ENCODE measurements at regions of chr15 and their contacts with region 1.

Region 1: DNA sequence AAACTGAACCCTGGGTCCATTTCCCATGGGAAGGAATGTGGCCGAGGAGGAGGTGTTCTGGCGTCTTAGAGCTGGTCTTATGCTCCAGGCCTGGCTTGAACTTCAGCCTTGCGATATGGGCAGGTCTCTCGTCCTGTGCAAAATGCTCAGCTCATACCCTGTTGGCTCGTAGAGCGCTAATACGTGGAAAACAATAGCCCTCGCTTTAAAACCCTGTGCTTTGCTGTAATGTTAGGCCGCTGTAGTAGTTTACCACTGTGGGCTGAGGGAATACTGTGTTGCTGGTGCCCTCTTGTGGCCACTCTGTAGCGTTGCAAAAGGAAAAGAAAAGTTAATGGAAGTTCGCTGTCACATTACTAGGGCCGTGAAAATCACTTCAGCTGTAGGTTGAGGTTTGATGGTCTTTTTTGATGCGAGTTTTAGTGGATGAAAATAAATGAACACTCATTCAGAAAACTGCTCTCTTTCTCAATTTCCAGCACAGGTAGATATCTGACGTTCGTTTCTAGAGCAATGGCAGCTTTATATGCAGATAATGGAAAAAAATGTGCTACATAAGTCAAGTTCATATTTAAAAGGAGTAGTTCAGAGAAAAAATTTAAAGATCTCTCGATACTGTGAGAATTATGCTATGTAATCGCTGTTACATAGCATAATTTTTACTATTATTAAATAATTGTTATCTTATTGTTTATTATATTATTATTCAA is 92.9 kb downstream of the MCTP2 start:
- DNase-seq: peak; percentile 35 to 49 (median 45)
- ATAC-seq: peak; percentile 92
- H3K4me3 ChIP-seq: no peak overlapping the region
- H3K27ac ChIP-seq: no peak overlapping the region
- H3K4me1 ChIP-seq: no peaks in the 10 kb centered on the region
- H3K27me3 ChIP-seq: no peaks in the 10 kb centered on the region
- CTCF ChIP-seq: peak; percentile 65 to 83 (median 80)
- EP300 ChIP-seq: no peak
- POLR2A ChIP-seq: no peak
- RAD21 ChIP-seq: peak; percentile 50 to 74

Region 2: GRCh38 chr15:94163999-94164807 is 160.1 kb before region 1 on chr15:
- CTCF ChIA-PET with region 1: interaction called, 3 read pairs
- POLR2A ChIA-PET with region 1: no interaction called
- in situ Hi-C with region 1: no loop called
- intact Hi-C with region 1: loop called (anchors 1 kb)
- DNase-seq: peak; percentile 12 to 38 (median 22)
- ATAC-seq: no peak
- H3K4me3 ChIP-seq: no peak overlapping the region
- H3K27ac ChIP-seq: no peak overlapping the region
- H3K4me1 ChIP-seq: no peaks in the 10 kb centered on the region
- H3K27me3 ChIP-seq: no peaks in the 10 kb centered on the region
- CTCF ChIP-seq: peak; percentile 40 to 57 (median 54); a peak in 5 of 6 replicates
- EP300 ChIP-seq: no peak
- POLR2A ChIP-seq: no peak
- RAD21 ChIP-seq: peak; percentile 27 to 56; a peak in 3 of 4 replicates

Measured in K562 (cell line).